Naive thymus-derived CD4-positive, alpha-beta T cell (primary cell): ENCODE measurements at regions of chr3 and their contacts with region 1.

Region 1: DNA sequence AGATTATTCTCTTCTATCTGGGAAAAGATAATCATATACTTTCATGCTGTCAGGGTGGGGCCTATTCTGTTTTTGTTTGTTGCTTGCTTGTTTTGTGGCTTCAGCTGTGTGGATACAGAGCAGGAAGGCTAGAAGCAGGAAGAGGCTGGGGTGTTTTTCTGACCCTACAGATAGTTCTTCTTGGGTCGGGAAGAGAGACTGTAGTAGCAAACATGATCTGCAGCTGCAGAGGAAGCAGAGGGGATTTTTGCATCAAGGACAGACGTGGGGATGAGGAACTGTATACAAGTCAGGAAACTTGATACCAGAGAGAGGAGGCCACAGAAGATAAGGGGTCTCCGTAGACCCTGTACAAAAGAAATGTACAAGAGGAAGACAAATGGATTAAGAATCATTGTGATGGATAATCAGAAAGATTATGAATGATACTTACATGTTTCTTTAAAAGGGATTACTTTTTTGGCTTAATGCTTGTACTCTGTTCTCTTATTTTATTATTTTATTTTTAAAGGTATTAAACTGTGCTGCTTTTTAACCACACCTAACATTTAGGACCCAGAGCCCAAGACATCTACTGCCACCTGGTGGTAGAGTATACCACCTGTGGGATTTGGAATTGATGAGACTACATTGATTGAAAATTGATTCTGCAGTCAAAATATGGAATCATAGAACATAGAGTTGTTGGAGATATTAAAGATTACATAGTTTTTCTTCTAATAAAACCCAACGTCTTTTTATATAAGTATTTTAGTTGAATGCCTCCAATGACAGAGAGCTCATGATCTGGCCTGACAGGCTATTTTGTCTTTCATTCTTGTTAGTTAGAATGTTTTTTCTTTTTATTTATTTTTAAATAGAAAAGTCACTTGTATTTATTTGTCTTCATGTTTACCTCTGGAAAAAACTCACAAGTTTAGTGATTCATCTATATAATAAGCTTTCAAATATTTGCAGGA is 87.3 kb upstream of the ROPN1 start:
- DNase-seq: peak in 3 of 9 donors; percentile 1 to 7 (median 2)
- ATAC-seq: no peak
- H3K4me3 ChIP-seq: no peak overlapping the region
- H3K4me3 Mint-ChIP-seq: no peak overlapping the region
- H3K27ac ChIP-seq: no peak overlapping the region
- H3K27ac Mint-ChIP-seq: peak overlapping the region in 1 of 9 donors; percentile 48
- H3K4me1 ChIP-seq: no peaks in the 10 kb centered on the region
- H3K4me1 Mint-ChIP-seq: peaks cover 0 to 2% (median 0%) of the 10 kb centered on the region in 7 donors
- H3K27me3 ChIP-seq: no peaks in the 10 kb centered on the region
- H3K27me3 Mint-ChIP-seq: peaks cover 5 to 43% (median 20%) of the 10 kb centered on the region in 5 donors

Region 2: DNA sequence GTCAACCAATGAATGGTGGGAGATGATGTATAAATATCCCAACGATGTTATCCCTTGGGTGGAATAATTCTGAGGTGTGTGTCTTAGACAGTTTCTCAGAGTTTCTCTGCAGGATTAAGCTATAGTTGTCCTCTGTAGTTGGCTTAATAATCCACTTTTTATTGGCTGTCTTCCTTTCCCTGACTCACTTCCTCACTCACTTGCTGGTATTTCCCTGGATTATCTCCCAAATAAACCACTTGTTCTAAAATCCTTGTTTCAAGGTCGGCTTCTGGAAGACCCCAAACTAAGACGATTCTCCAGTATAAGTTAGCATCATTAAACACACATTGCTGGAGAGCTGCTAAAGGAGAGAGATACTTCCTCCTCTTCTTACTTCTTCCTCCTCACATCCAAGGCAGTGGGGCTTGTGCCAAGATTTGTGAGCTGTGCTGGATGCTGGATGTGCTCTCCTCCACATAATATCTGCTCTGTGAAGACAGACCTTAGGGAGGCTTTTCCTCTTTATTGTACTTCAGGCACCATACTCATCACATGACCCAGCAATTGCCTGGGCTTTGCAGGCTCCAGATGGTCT is 64.8 kb before region 1 on chr3:
- CTCF ChIA-PET with region 1: no interaction called
- POLR2A ChIA-PET with region 1: no interaction called
- intact Hi-C with region 1: loop called in 1 of 2 experiments (anchors 1 kb)
- DNase-seq: no peak
- ATAC-seq: no peak
- H3K4me3 ChIP-seq: no peak overlapping the region
- H3K4me3 Mint-ChIP-seq: no peak overlapping the region
- H3K27ac ChIP-seq: no peak overlapping the region
- H3K27ac Mint-ChIP-seq: no peak overlapping the region
- H3K4me1 ChIP-seq: no peaks in the 10 kb centered on the region
- H3K4me1 Mint-ChIP-seq: no peaks in the 10 kb centered on the region
- H3K27me3 ChIP-seq: peaks cover 0 to 3% of the 10 kb centered on the region in 2 donors
- H3K27me3 Mint-ChIP-seq: peaks cover 43 to 53% (median 52%) of the 10 kb centered on the region in 5 donors